ENCODE measurements at regions of chr10 and their contacts with region 1.

Region 1: DNA sequence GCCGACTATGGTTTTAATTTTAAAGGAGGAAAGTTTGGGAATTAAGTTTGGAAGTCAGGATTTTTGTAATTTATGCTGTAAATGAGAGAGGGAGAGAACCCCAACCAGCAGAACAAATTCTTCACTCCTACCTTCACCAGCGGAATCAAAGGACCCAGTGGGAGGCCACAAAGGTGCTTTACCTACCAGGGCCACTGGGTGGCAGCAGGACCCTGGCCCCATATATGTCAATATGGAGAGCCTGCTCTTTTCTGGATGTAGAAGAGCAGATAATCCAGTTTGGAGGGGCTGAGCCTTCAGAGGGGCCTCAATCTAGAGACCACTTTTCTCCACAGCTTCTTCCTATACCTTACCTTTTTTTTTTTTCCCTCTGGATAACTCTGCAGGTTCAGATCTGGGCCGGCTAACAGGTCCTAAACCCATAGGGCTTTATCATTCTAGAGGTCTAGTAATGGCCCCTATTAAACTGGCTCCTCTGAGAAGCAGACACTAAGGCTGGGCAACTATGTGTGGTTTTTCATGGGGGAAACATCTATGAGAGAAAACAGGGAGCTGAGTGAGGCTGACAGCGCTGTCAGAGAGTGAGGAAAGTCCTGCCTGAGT is 8.5 kb upstream of the SCD start:
- DNase-seq: peak in 1 of 2 experiments; percentile 92
- H3K4me3 ChIP-seq: no peak overlapping the region
- H3K27ac ChIP-seq: no peak overlapping the region
- H3K4me1 ChIP-seq: peaks cover 3 to 15% (median 5%) of the 10 kb centered on the region in 4 experiments; a peak in 4 of 7 replicates
- H3K27me3 ChIP-seq: no peaks in the 10 kb centered on the region; a peak in 3 of 7 replicates
- CTCF ChIP-seq: peak; percentile 81 to 88 (median 87)
- EP300 ChIP-seq: no peak
- POLR2A ChIP-seq: no peak
- RAD21 ChIP-seq: peak; percentile 87 to 89

Region 2: GRCh38 chr10:100327007-100327717 is 11.4 kb before region 1 on chr10:
- CTCF ChIA-PET with region 1: interaction called, 38 read pairs
- POLR2A ChIA-PET with region 1: interaction called, 3 read pairs
- DNase-seq: no peak
- H3K4me3 ChIP-seq: no peak overlapping the region
- H3K27ac ChIP-seq: no peak overlapping the region
- H3K4me1 ChIP-seq: no peaks in the 10 kb centered on the region; a peak in 1 of 7 replicates
- H3K27me3 ChIP-seq: no peaks in the 10 kb centered on the region; a peak in 3 of 7 replicates
- CTCF ChIP-seq: no peak
- EP300 ChIP-seq: no peak
- POLR2A ChIP-seq: no peak
- RAD21 ChIP-seq: no peak

Region 3: GRCh38 chr10:100353770-100354485 is 15.4 kb after region 1 on chr10:
- CTCF ChIA-PET with region 1: interaction called, 46 read pairs
- POLR2A ChIA-PET with region 1: interaction called, 103 read pairs
- DNase-seq: no peak
- H3K4me3 ChIP-seq: no peak overlapping the region
- H3K27ac ChIP-seq: no peak overlapping the region; the same call in 1 of the 2 replicates
- H3K4me1 ChIP-seq: peaks cover 9 to 18% (median 14%) of the 10 kb centered on the region in 4 experiments
- H3K27me3 ChIP-seq: no peaks in the 10 kb centered on the region
- CTCF ChIP-seq: no peak
- EP300 ChIP-seq: no peak
- POLR2A ChIP-seq: peak in 1 of 2 experiments; percentile 37; a peak in 1 of 3 replicates
- RAD21 ChIP-seq: no peak

Region 4: GRCh38 chr10:100373298-100374136 is 35.0 kb after region 1 on chr10:
- CTCF ChIA-PET with region 1: interaction called, 7 read pairs
- POLR2A ChIA-PET with region 1: interaction called, 24 read pairs
- DNase-seq: peak; percentile 91 to 98
- H3K4me3 ChIP-seq: peak overlapping the region; percentile 63 to 71 (median 66)
- H3K27ac ChIP-seq: peak overlapping the region; percentile 90
- H3K4me1 ChIP-seq: peaks cover 8 to 25% (median 9%) of the 10 kb centered on the region in 4 experiments
- H3K27me3 ChIP-seq: no peaks in the 10 kb centered on the region
- CTCF ChIP-seq: no peak
- EP300 ChIP-seq: peak in 1 of 2 experiments; percentile 10; a peak in 1 of 3 replicates
- POLR2A ChIP-seq: peak; percentile 44 to 58; a peak in 2 of 3 replicates
- RAD21 ChIP-seq: no peak

Region 5: DNA sequence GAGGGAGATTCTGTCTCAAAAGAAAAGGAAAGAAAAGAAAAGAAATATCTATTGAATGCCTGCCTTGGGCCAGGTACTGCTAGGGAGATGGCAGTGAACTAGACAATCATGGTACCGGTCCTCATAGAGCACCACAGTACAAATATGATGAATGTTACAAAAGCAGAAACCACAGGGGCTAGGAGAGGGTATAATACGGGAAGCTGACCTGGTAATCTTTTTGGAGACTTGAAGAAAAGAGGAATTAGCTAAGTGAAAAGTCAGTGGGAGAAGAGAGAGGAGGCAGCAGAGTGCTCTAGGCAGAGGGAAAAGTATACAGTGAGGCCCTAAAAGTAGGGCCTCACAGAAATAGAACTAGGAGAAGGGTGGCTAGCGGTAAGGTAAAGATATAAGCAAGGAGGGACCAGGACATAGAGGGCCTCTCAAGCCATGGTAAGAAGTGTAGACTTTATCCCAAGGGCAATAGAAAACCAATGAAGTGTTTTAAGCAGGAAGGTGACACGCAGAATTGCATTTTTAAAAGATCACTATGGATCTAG is 81.4 kb after region 1 on chr10:
- CTCF ChIA-PET with region 1: interaction called, 11 read pairs
- POLR2A ChIA-PET with region 1: no interaction called
- DNase-seq: no peak
- H3K4me3 ChIP-seq: no peak overlapping the region
- H3K27ac ChIP-seq: no peak overlapping the region
- H3K4me1 ChIP-seq: no peaks in the 10 kb centered on the region
- H3K27me3 ChIP-seq: no peaks in the 10 kb centered on the region; a peak in 1 of 7 replicates
- CTCF ChIP-seq: no peak
- EP300 ChIP-seq: no peak
- POLR2A ChIP-seq: no peak
- RAD21 ChIP-seq: no peak

Region 6: GRCh38 chr10:100508691-100509150 is 170.2 kb after region 1 on chr10:
- CTCF ChIA-PET with region 1: interaction called, 38 read pairs
- POLR2A ChIA-PET with region 1: no interaction called
- DNase-seq: no peak
- H3K4me3 ChIP-seq: no peak overlapping the region
- H3K27ac ChIP-seq: no peak overlapping the region
- H3K4me1 ChIP-seq: no peaks in the 10 kb centered on the region; a peak in 1 of 7 replicates
- H3K27me3 ChIP-seq: peaks cover 0 to 11% (median 4%) of the 10 kb centered on the region in 4 experiments; a peak in 3 of 7 replicates
- CTCF ChIP-seq: peak in 2 of 3 experiments; percentile 81 to 88; a peak in 3 of 4 replicates
- EP300 ChIP-seq: no peak
- POLR2A ChIP-seq: no peak
- RAD21 ChIP-seq: peak; percentile 95 to 98

Region 7: GRCh38 chr10:100551196-100551595 is 212.7 kb after region 1 on chr10:
- CTCF ChIA-PET with region 1: no interaction called
- POLR2A ChIA-PET with region 1: no interaction called
- DNase-seq: no peak
- H3K4me3 ChIP-seq: no peak overlapping the region
- H3K27ac ChIP-seq: no peak overlapping the region
- H3K4me1 ChIP-seq: no peaks in the 10 kb centered on the region
- H3K27me3 ChIP-seq: no peaks in the 10 kb centered on the region
- CTCF ChIP-seq: no peak
- EP300 ChIP-seq: no peak
- POLR2A ChIP-seq: no peak
- RAD21 ChIP-seq: no peak